CD14-positive monocyte (primary cell): ENCODE measurements at regions of chr13 and their contacts with region 1.

Region 1: DNA sequence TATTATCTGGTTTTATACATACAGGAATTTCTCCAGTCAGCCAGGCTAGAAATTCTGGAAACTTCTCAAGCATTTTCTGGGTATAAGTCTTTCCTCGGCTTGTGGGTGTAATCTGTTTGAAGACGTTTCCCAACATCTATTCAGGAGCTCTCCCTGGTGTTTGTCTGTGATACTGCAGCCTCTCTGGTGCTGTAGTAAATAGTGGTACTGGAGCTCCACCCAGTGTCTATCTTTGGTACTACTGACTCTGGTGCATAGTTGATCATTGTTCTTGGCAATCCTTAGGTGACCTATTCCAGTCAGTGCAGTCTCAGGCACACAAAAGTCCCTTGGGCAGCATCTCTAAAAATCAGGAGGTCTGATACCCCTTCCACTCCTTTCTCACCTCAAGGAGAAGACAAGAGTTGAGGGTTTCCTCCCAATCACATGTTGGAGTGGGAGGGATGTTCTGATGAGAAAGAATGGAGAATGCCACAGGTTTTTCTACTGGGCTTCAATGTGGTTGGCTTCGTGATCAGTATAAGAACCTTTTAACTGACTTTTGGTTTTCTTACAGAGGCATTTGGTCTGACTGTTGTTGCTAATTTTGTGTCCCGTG is 115.5 kb downstream of the CYSLTR2 start:
- DNase-seq: peak; percentile 81 to 94 (median 86)
- H3K4me3 ChIP-seq: no peak overlapping the region
- H3K4me3 Mint-ChIP-seq: peak overlapping the region in 1 of 2 donors; percentile 3
- H3K27ac ChIP-seq: no peak overlapping the region
- H3K27ac Mint-ChIP-seq: peak overlapping the region in 2 of 7 donors; percentile 10 to 35
- H3K4me1 ChIP-seq: no peaks in the 10 kb centered on the region
- H3K4me1 Mint-ChIP-seq: peaks cover 18% of the 10 kb centered on the region
- H3K27me3 ChIP-seq: no peaks in the 10 kb centered on the region
- H3K27me3 Mint-ChIP-seq: peaks cover 0 to 2% (median 2%) of the 10 kb centered on the region in 3 donors
- CTCF ChIP-seq: peak; percentile 100

Region 2: DNA sequence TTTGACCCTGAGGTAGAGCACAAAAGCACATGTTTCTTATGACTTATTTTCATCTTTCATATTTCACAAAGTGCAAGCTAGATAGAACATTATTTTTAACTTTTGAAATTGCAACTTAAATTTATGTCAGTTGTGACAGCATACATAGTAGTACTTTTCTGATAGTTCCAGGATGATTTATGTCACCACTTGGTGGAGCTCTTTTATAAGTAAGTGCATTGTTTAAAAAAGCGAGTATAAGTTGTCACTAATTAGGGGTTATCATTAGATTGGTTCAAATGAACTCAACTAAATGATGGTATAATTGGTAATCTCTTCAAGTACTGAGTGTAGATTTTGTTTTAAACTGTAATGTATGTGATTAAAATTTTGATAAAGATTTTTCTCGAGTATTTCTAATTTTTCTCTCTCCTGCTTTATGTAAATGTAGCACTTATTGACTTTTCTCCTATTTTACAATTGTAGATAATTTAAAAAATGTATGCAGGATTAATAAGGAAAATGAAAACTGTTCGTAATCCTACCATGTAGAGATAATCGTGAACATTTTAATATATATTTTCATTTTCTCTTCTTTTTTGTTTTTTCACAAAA is 434.6 kb before region 1 on chr13:
- intact Hi-C with region 1: loop called in 1 of 2 experiments (anchors 10 kb)
- DNase-seq: peak in 2 of 3 donors; percentile 42 to 62
- H3K4me3 ChIP-seq: no peak overlapping the region
- H3K4me3 Mint-ChIP-seq: no peak overlapping the region
- H3K27ac ChIP-seq: no peak overlapping the region
- H3K27ac Mint-ChIP-seq: no peak overlapping the region
- H3K4me1 ChIP-seq: no peaks in the 10 kb centered on the region
- H3K4me1 Mint-ChIP-seq: peaks cover 9% of the 10 kb centered on the region
- H3K27me3 ChIP-seq: no peaks in the 10 kb centered on the region
- H3K27me3 Mint-ChIP-seq: peaks cover 0 to 3% (median 0%) of the 10 kb centered on the region in 3 donors
- CTCF ChIP-seq: peak; percentile 84

Region 3: DNA sequence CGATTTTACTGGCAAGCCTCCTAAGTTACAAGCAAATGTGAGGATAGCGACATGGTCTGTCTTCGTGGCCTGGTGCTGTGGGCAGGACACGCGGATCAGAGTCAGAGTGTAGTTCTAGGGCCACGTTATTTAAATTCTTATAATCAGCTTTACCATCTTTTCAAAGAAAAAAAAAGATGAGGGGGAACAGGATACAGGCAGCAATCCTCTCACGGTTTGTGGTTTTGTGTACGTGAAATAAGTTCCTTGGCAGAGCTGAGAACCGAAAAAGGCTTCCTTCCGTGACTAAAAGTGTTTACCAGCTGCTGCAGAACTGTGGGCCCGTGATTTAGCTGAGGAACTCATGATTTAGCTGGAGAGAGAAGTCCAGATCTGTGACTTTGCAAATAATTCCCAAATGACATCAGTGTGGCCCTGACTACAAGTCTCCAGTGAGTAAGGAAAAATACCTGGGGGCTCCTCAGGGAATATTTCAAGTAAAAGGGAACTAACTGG is 263.6 kb before region 1 on chr13:
- intact Hi-C with region 1: loop called in 1 of 2 experiments (anchors 10 kb)
- DNase-seq: peak; percentile 82 to 91 (median 91)
- H3K4me3 ChIP-seq: peak overlapping the region in 1 of 3 experiments; percentile 32
- H3K4me3 Mint-ChIP-seq: peak overlapping the region; percentile 56 to 63
- H3K27ac ChIP-seq: peak overlapping the region; percentile 93 to 97
- H3K27ac Mint-ChIP-seq: peak overlapping the region; percentile 87 to 98 (median 95)
- H3K4me1 ChIP-seq: peaks cover 64 to 79% of the 10 kb centered on the region in 2 donors
- H3K4me1 Mint-ChIP-seq: peaks cover 79% of the 10 kb centered on the region
- H3K27me3 ChIP-seq: no peaks in the 10 kb centered on the region
- H3K27me3 Mint-ChIP-seq: peaks cover 0 to 3% (median 1%) of the 10 kb centered on the region in 3 donors
- CTCF ChIP-seq: no peak

Region 4: DNA sequence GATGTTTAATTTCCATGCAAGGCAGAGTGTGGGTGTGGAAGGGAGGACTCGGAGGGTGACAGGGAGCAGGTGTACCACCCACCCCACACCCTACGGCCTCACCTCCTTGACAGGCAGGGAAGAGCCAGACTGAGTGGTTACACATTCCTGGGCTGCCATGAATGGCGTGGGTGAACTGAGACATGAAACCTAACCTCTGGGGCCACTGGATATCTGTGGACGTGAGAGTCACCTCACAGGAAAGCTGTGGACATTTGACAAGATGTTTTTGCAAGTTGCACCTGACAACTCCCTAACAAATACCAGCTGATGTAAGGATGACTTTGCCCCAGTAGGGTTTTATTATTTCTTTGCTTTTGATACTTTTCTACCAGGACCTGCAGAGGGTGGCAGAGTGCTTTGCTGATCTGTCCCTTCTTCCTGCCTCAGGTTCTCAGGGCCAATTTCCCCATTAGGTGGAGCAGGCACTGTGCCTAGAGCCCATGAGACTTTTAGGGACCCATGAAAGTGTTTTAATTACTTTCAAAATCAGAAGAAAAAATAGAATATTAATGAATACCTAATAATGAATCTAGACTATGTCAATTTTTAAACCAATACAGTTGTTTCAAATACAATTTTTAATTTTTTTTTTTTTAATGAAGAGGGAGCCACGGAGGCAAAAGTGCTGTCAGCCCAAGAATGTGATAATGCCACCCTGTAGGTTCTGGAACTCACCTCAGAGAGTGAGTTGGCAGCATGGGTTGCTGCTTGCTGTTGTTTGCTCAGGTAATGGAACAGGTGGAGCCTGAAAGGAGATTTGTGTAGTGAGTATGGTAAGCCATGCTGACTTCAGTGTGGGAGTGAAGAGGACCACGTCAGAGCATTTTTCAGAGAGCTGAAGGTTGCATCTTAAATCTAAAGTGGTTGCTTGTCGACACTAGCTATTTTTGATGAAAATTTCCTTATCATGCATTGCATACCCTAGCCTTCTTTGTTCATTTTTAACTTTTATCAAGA is 173.5 kb before region 1 on chr13:
- intact Hi-C with region 1: loop called (anchors 1 kb)
- DNase-seq: peak; percentile 74 to 81 (median 76)
- H3K4me3 ChIP-seq: no peak overlapping the region
- H3K4me3 Mint-ChIP-seq: no peak overlapping the region
- H3K27ac ChIP-seq: no peak overlapping the region
- H3K27ac Mint-ChIP-seq: peak overlapping the region in 1 of 7 donors; percentile 32
- H3K4me1 ChIP-seq: peaks cover 0 to 13% of the 10 kb centered on the region in 2 donors
- H3K4me1 Mint-ChIP-seq: peaks cover 17% of the 10 kb centered on the region
- H3K27me3 ChIP-seq: no peaks in the 10 kb centered on the region
- H3K27me3 Mint-ChIP-seq: no peaks in the 10 kb centered on the region
- CTCF ChIP-seq: peak; percentile 76

Region 5: GRCh38 chr13:48660361-48661076 is 108.7 kb before region 1 on chr13:
- intact Hi-C with region 1: no loop called
- DNase-seq: peak; percentile 81 to 91 (median 87)
- H3K4me3 ChIP-seq: peak overlapping the region in 1 of 3 experiments; percentile 49
- H3K4me3 Mint-ChIP-seq: peak overlapping the region; percentile 53 to 79
- H3K27ac ChIP-seq: peak overlapping the region; percentile 70 to 87
- H3K27ac Mint-ChIP-seq: peak overlapping the region; percentile 97 to 99 (median 98)
- H3K4me1 ChIP-seq: peaks cover 58 to 60% of the 10 kb centered on the region in 2 donors
- H3K4me1 Mint-ChIP-seq: peaks cover 53% of the 10 kb centered on the region
- H3K27me3 ChIP-seq: no peaks in the 10 kb centered on the region
- H3K27me3 Mint-ChIP-seq: peaks cover 0 to 3% (median 0%) of the 10 kb centered on the region in 3 donors
- CTCF ChIP-seq: no peak

Region 6: DNA sequence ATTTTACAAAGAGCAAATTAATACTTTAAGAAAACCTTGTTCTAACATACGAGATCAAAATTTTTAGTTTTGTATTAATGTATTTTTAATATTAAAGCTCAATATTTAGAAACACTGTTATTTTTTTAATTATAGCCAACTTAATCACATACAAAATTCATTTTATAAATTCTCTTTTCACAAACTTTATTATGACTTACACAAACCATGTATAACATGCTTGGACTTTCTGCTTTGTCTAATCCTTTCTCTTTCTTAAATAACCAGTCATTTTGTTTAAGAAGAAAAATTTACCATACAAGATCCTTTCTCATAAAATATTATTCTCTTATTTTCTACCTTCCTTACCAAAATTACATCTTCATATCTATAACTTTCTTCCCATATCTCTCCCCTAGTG is 53.2 kb before region 1 on chr13:
- intact Hi-C with region 1: no loop called
- DNase-seq: no peak
- H3K4me3 ChIP-seq: no peak overlapping the region
- H3K4me3 Mint-ChIP-seq: no peak overlapping the region
- H3K27ac ChIP-seq: no peak overlapping the region
- H3K27ac Mint-ChIP-seq: no peak overlapping the region
- H3K4me1 ChIP-seq: no peaks in the 10 kb centered on the region
- H3K4me1 Mint-ChIP-seq: no peaks in the 10 kb centered on the region
- H3K27me3 ChIP-seq: no peaks in the 10 kb centered on the region
- H3K27me3 Mint-ChIP-seq: peaks cover 0 to 2% (median 1%) of the 10 kb centered on the region in 3 donors
- CTCF ChIP-seq: no peak

Region 7: DNA sequence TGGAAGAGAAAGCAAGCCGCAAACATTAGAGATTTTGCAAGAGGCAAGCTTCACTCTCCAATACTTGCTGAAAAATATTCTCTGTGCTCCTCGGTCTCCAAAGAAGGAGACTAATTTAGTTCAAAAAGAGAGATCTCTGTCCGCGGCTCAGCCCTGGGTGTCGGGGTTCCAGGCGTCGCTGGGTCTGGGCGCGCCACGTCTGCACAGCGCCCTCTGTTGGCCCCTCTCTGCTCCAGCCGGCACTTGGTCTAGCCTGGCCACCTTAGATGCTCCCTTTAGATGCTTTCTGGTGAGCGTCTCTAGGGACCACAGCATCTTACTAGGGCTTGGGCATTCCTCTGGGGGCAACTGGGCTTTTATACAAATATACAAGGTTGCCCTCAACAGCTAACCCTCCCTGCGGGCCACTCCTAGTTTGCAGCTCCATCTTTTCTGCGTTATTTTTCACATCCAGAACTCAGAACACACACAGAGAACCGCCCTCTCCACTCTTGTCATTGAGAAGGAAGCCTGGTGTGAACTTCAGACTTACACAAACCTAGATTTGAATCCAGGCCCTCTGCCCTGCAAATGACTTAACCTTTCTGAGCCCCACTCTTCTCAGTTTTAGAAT is 37.1 kb before region 1 on chr13:
- intact Hi-C with region 1: loop called in 1 of 2 experiments (anchors 5 kb)
- DNase-seq: peak; percentile 40 to 58 (median 54)
- H3K4me3 ChIP-seq: peak overlapping the region; percentile 2 to 64 (median 4)
- H3K4me3 Mint-ChIP-seq: peak overlapping the region; percentile 81 to 95
- H3K27ac ChIP-seq: peak overlapping the region in 1 of 2 donors; percentile 32
- H3K27ac Mint-ChIP-seq: peak overlapping the region; percentile 50 to 80 (median 75)
- H3K4me1 ChIP-seq: peaks cover 9% of the 10 kb centered on the region in 2 donors
- H3K4me1 Mint-ChIP-seq: peaks cover 18% of the 10 kb centered on the region
- H3K27me3 ChIP-seq: no peaks in the 10 kb centered on the region
- H3K27me3 Mint-ChIP-seq: peaks cover 0 to 2% (median 0%) of the 10 kb centered on the region in 3 donors
- CTCF ChIP-seq: peak; percentile 90

Region 8: DNA sequence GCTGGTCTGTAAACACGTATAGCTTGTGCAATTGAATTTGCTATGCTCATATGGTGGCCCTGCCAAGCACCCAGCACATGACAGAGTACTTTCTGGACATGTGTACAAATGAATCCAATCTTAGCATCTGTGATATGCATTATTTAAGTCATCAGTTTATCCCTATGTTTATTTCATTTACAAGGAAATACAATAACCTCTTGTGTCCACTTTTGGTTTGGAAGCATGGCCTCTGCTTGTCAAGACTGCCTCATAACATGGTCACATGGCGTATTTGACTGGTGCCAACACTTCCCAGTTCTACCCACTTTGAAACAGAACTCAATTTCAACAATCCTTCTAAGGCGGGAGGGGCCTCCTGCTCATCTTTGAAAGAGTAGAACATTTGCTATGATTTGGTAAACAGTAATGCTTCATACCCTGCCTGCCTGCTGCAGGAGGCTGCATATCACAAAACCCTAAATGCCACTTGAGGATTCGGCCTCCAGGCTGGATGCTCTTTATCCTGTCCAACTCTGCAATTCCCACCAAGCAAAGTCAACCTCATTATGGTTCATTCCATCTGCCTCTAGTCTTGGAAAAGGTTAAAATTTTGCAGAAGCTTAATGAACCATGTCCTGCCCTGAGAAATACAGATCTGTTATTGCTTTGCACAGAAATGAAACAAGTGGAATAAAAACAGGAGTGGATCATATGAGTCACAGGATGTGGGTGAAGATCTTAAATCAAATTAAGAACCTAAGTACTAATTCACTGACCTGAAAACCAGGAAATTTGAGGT is 35.8 kb after region 1 on chr13:
- intact Hi-C with region 1: no loop called
- DNase-seq: no peak
- H3K4me3 ChIP-seq: no peak overlapping the region
- H3K4me3 Mint-ChIP-seq: no peak overlapping the region
- H3K27ac ChIP-seq: no peak overlapping the region
- H3K27ac Mint-ChIP-seq: no peak overlapping the region
- H3K4me1 ChIP-seq: peaks cover 5 to 13% of the 10 kb centered on the region in 2 donors
- H3K4me1 Mint-ChIP-seq: peaks cover 17% of the 10 kb centered on the region
- H3K27me3 ChIP-seq: no peaks in the 10 kb centered on the region
- H3K27me3 Mint-ChIP-seq: peaks cover 0 to 2% (median 0%) of the 10 kb centered on the region in 3 donors
- CTCF ChIP-seq: no peak

Region 9: GRCh38 chr13:48818495-48819031 is 49.4 kb after region 1 on chr13:
- intact Hi-C with region 1: no loop called
- DNase-seq: no peak
- H3K4me3 ChIP-seq: no peak overlapping the region
- H3K4me3 Mint-ChIP-seq: no peak overlapping the region
- H3K27ac ChIP-seq: no peak overlapping the region
- H3K27ac Mint-ChIP-seq: no peak overlapping the region
- H3K4me1 ChIP-seq: no peaks in the 10 kb centered on the region
- H3K4me1 Mint-ChIP-seq: peaks cover 9% of the 10 kb centered on the region
- H3K27me3 ChIP-seq: no peaks in the 10 kb centered on the region
- H3K27me3 Mint-ChIP-seq: peaks cover 0 to 3% (median 2%) of the 10 kb centered on the region in 3 donors
- CTCF ChIP-seq: no peak